AG04450 (cell line): ENCODE measurements at regions of chr10 and their contacts with region 1.

Region 1: GRCh38 chr10:10056961-10057360 is 960.7 kb upstream of the CELF2 start:
- DNase-seq: no peak
- H3K4me3 ChIP-seq: no peak overlapping the region
- H3K27ac ChIP-seq: no peak overlapping the region
- H3K27me3 ChIP-seq: no peaks in the 10 kb centered on the region
- CTCF ChIP-seq: peak; percentile 42

Region 2: DNA sequence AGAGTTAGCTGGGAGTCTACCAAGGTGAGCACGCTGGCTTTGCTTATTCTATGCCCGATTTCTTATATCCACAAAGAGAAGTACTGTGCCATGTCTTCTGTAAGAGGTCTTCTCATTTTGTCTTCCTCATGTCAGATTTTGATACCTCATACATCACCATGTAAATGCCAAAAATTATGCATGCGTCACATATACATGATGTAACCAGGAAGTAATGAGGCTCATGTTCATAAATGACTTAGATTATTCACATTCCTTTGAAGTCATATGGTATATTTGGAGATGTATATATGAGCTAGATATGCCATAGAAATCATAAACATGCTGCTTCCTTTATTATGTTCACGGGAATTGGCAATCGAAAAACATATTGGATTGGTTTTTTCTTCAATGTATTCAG is 863.0 kb after region 1 on chr10:
- CTCF ChIA-PET with region 1: no interaction called
- POLR2A ChIA-PET with region 1: interaction called, 12 read pairs
- DNase-seq: no peak
- H3K4me3 ChIP-seq: no peak overlapping the region
- H3K27ac ChIP-seq: no peak overlapping the region
- H3K27me3 ChIP-seq: no peaks in the 10 kb centered on the region
- CTCF ChIP-seq: no peak